ENCODE measurements at regions of chr6 and their contacts with region 1.

Region 1: GRCh38 chr6:131586543-131586942 is 13.5 kb downstream of the ARG1 start:
- DNase-seq: no peak
- ATAC-seq: no peak

Region 2: DNA sequence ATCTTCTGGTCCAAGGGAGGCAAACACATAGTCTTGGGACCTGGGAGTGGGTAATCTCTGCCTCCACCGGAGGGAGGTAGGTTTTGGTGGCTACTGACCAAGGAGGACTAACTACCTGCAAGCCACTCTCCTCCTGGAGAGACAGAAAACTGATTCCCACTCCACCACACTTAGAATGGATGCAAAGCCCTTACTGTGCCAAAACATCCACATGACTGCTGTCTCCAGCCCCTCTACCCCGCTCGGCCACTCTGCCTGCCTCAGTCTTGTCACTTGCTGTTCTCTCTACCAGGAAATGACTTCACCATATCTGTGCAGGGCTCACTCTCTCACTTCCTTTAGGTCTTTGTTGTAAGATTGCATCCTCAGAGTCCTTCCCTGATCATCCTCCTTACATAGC is 143.0 kb before region 1 on chr6:
- intact Hi-C with region 1: no loop called
- DNase-seq: no peak
- ATAC-seq: no peak

Region 3: DNA sequence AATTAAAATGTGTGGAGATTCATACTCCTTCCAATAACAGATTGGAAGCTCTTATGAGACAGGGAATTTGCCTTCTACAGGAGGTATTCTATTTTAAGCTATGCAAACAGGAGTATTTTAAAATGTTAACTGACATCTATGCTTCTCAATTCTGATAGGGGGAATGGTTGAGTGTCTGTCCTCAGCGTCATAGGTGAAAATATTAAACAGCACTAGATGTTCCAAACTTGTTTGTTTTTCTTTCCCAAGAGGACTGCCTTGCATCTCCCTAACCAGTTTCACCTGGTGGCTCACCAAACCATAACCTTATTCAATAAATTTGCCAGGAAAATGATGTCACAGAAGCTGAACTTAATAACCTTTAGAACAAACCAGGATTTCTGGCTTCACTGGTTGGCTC is 38.1 kb before region 1 on chr6:
- intact Hi-C with region 1: no loop called
- DNase-seq: no peak
- ATAC-seq: no peak

Region 4: DNA sequence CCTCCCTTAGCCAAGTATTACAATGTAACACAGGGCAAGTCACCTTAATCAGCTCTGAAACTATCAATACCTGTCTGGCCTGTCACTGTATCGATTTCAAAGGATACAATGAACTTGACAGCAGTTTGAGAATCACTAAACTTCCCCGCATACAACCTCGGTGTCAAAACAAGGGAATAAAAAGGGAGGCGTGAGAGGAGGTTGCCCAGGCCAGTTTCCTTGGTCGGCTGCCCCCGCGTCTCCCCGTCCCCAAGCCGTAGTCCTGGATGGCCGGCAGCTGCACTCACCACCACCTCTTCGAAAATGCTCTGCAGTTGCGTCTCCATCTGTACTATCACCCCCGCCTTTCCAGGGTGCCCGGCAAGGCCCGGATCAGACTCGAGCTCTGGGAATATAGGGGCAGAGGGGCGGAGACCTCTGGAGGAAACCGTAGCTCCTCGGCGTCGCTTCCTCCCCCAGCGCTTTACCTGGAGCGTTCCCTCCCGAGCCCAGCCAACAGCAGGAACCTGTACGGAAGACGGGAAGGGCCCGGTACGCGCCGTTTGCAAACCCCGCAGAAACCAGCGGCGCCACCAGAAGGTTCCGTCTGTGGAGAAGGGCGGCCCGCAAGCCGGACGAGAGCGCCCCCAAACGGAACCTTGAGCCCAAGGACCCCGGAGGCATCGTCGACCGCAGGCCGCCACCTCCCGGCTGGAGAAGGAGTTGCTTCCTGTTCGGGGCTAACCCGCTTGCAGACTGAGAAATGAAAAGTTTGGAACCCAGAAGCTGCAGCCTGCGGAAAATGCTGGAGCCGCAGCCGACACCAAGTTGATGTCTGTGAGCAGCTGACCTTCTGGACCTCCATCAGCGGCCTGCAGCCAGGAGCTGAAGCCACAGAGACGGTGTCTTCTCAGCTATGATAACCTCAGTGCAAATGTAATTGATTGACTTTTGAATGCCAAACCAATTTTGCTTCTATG is 41.5 kb after region 1 on chr6 and contains the start of gene MED23:
- intact Hi-C with region 1: loop called in 1 of 2 experiments (anchors 5 kb)
- DNase-seq: peak; percentile 95 to 97
- ATAC-seq: peak; percentile 95
- total RNA-seq, gene MED23: 26.5 to 29.5 TPM

Region 5: GRCh38 chr6:131890091-131890490 is 303.5 kb after region 1 on chr6:
- intact Hi-C with region 1: no loop called
- DNase-seq: no peak
- ATAC-seq: no peak

Measured in left colon (tissue), 2 donors.